Head of caudate nucleus (tissue), 42 donors: ENCODE measurements at regions of chr4 and their contacts with region 1.

Region 1: DNA sequence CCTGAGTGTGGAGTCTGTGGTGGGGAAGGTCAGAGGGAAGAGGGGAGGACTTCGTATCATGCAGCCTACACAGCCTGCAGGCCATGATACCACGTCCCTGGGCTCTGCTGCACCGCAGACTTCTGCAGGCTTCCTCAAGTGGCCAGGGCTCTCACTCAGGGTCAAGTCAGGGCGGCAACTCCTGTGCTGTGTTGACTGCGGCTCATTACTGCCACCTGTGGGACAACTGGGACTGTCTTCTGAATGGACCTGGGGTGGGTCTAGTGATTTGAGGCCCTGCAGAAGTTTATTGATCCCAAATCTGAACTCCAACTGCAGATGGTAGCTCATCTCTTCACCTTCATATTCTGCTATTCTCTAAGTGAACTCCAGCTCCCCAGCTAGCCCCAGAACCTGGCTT is 167.1 kb downstream of the NSUN7 start:
- DNase-seq: peak in 29 of 42 donors; percentile 28 to 77 (median 45)

Region 2: DNA sequence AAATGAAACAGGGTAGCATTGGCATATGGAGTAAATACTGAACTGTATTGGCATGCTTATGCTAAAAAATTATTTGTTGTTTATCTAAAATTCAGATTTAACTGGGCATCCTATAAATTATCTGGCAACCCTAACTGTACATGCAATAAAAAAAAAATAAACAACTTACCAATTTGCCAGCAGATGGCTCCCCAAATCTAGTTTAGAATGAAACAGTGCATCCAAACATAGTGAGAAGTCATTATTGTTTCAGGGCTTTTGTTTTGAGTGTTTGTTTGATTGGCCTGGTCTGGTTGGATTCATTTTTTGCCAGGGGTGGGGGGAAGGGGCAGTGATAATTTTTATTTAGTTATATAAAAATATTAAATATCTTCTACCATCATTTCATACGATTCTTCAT is 180.0 kb before region 1 on chr4:
- intact Hi-C with region 1: loop called (anchors 5 kb)
- DNase-seq: peak in 5 of 42 donors; percentile 16 to 54 (median 29)